Activated naive CD4-positive, alpha-beta T cell treated with anti-CD3 and anti-CD28 coated beads for 36 hours (primary cell): ENCODE measurements at regions of chr10 and their contacts with region 1.

Region 1: DNA sequence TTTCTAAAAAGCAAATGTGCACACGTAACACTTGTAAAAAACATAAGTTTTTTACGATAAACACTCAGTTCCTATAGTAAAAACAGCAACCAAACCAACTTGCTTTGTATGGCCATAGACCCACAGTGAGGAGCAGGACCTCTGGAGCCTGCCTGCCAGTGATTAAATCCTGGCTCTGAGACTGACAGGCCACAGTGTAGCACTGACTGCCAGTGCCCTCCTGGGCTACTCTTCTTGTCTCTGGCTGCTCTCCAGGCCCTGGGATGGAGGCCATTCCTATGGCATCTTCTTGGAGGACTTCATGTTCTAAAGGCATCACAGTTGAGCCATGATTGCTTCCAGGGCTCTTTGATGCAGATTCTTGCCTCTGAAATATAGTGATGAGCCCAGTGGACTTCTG is 22.7 kb upstream of the TMEM254 start:
- DNase-seq: no peak
- H3K4me3 Mint-ChIP-seq: no peak overlapping the region
- H3K27ac Mint-ChIP-seq: no peak overlapping the region
- H3K4me1 Mint-ChIP-seq: peaks cover 2% of the 10 kb centered on the region
- H3K27me3 Mint-ChIP-seq: no peaks in the 10 kb centered on the region

Region 2: DNA sequence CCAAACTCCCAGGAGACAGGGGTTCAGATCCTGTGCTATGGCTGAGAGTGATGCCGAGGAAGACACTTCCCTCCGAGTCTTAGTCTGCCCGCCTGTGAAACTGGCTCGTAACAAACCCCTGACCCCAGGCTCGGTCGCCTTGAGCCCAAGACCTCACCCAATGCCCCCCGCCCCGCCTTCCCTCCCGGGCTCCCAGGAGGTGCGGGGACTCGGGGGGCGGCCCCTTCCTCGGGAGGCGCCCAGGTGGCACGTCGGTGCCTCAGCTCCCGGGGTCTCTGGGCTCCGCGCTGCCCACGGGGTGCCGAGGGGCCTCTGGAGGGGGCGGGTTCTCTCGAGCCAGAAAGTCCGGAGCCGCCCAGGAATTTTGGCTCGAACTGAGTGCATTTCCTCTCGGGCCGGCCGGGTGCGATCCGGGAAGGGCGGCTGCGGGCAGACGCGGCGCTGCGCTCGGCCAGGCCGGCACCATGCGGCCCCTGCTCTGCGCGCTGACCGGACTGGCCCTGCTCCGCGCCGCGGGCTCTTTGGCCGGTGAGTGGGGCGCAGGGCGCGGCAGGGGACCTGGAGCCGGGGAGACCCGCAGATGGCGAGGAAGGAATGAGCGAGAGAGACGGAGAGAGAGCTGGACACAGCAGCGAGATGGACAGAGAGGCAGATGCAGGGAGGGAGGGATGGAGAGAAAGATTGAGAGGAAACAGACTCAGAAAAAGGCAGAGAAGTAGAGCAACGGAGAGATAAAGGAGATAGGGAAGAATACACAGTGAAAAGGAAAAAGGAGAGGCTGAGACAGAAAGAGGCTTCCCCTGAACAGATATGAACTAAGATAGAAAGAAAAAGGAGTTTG is 76.8 kb after region 1 on chr10 and contains the start of gene PLAC9:
- CTCF ChIA-PET with region 1: interaction called, 4 read pairs
- intact Hi-C with region 1: loop called (anchors 1 kb)
- DNase-seq: no peak
- H3K4me3 Mint-ChIP-seq: no peak within 1 kb of the TSS
- H3K27ac Mint-ChIP-seq: no peak within 1 kb of the TSS
- H3K4me1 Mint-ChIP-seq: peaks cover 4% of the 10 kb centered on the region
- H3K27me3 Mint-ChIP-seq: peaks cover 29% of the 10 kb centered on the region
- total RNA-seq, gene PLAC9: not detected